ENCODE measurements at regions of chr21 and their contacts with region 1.

Region 1: DNA sequence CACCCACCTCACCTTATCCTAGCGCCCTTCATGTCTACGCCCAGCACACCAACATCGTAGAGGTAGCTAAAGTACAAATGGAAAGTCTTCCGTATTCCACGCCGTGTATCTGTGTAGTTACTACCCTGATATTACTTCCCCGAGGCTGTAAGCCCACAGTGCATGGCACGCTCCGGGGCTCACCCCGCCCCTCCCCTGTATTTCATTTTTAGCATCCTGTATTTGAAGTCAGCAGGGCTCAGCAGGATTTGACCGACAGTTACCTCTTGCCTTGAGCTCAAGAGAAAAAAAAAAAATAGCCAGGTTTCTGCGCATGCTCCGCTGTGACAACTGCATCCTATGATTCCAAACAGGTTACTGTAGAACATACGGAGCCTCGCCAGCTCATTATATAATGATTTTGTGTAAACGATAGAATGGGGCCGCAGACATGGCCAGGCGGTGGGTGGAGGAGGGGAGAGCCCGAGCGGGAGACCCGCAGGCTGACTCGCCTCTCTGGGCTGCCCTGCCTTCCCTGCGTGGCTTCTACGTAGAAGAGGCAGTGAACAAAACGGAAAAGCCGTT is 1.3 kb downstream of the ABCG1 start:
- DNase-seq: peak; percentile 34 to 96 (median 70)
- ATAC-seq: peak; percentile 87
- H3K4me3 ChIP-seq: peak overlapping the region; percentile 84 to 88
- H3K4me3 Mint-ChIP-seq: peak overlapping the region; percentile 89
- H3K27ac ChIP-seq: peak overlapping the region; percentile 74 to 91
- H3K27ac Mint-ChIP-seq: peak overlapping the region; percentile 94
- H3K4me1 ChIP-seq: peaks cover 11% of the 10 kb centered on the region
- H3K4me1 Mint-ChIP-seq: peaks cover 32% of the 10 kb centered on the region
- H3K27me3 ChIP-seq: no peaks in the 10 kb centered on the region
- H3K27me3 Mint-ChIP-seq: no peaks in the 10 kb centered on the region
- CTCF ChIP-seq: no peak

Region 2: DNA sequence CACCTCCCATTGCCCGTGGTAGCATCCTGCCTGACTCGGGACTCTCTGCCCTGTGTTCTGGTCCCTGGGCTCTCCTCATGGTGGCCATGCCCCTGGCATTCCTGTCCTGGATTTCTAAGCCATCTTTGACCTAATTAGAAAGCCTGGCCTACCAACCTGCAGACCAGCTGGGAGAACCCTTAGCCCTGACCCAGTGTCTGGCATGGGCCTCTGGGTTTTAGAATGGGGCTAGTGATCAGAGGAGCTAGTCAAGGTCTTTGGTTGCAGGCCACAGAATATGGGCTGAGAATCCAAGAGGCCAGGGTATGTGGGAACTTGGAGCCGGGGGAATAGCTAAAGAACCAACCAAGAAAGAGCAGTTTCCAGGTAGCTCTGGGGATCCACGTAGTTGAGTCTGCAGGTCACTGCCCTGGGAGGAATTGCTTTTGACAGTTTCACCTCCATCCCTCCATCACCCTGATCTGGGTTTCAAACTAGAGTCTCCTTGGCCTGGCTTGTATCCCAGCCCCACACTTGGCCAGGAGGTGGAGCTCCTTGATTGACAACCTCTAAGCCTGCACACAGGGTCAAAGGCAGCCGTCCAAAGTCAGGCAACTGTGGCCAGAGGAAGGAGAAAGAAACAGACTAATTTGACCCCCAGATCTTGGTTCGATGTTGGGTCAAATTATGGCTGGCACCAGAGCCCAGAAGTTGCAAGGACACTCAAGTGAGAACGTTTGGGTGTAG is 56.0 kb before region 1 on chr21:
- CTCF ChIA-PET with region 1: interaction called, 10 read pairs
- POLR2A ChIA-PET with region 1: interaction called, 3 read pairs
- intact Hi-C with region 1: loop called (anchors 5 kb)
- DNase-seq: peak in 8 of 9 experiments; percentile 36 to 75 (median 58)
- ATAC-seq: peak; percentile 34
- H3K4me3 ChIP-seq: no peak overlapping the region
- H3K4me3 Mint-ChIP-seq: no peak overlapping the region
- H3K27ac ChIP-seq: no peak overlapping the region
- H3K27ac Mint-ChIP-seq: no peak overlapping the region
- H3K4me1 ChIP-seq: peaks cover 34% of the 10 kb centered on the region
- H3K4me1 Mint-ChIP-seq: peaks cover 32% of the 10 kb centered on the region
- H3K27me3 ChIP-seq: no peaks in the 10 kb centered on the region
- H3K27me3 Mint-ChIP-seq: no peaks in the 10 kb centered on the region
- CTCF ChIP-seq: peak; percentile 51

Region 3: DNA sequence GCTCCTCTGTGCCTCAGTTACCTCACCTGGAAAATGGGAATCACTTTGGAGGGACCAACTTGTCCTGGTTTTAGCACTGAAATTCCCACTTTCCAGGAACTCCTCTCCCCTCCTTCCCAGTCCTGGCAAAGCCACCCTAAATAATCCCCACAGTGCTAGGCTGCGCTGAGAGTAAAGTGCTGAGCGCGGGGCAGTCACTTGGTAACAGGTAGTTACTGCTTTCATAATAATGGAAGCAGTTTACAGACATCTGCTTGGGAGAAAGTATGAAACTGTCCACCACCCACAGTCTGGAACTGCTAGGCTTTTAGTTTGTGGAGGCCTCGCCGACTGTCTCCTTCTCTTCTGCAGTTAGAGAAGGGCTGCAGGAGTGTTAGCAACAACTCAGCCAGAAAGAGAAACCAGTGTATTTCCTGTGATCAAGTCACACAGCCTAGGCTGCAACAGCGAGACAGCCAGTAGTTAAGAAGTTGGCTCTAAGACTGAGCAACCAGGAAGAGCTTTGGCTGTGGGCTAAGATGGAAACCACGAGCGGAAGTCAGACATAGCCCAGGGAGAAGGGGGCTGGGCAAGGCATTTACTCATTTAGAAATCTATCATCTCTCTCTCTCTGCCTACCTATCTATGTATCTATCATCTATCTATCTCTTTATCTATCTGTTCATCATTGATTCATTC is 32.1 kb before region 1 on chr21:
- CTCF ChIA-PET with region 1: interaction called, 3 read pairs
- POLR2A ChIA-PET with region 1: interaction called, 13 read pairs
- intact Hi-C with region 1: loop called (anchors 1 kb)
- DNase-seq: peak; percentile 58 to 95 (median 80)
- ATAC-seq: peak; percentile 85
- H3K4me3 ChIP-seq: peak overlapping the region; percentile 11 to 22
- H3K4me3 Mint-ChIP-seq: peak overlapping the region; percentile 74
- H3K27ac ChIP-seq: peak overlapping the region; percentile 63 to 85
- H3K27ac Mint-ChIP-seq: peak overlapping the region; percentile 97
- H3K4me1 ChIP-seq: peaks cover 86% of the 10 kb centered on the region
- H3K4me1 Mint-ChIP-seq: peaks cover 77% of the 10 kb centered on the region
- H3K27me3 ChIP-seq: no peaks in the 10 kb centered on the region
- H3K27me3 Mint-ChIP-seq: no peaks in the 10 kb centered on the region
- CTCF ChIP-seq: no peak

Region 4: GRCh38 chr21:42199488-42200458 is 20.4 kb before region 1 on chr21:
- CTCF ChIA-PET with region 1: interaction called, 3 read pairs
- POLR2A ChIA-PET with region 1: interaction called, 3 read pairs
- intact Hi-C with region 1: loop called (anchors 1 to 2 kb)
- DNase-seq: peak in 4 of 9 experiments; percentile 34 to 76 (median 48)
- ATAC-seq: peak; percentile 77
- H3K4me3 ChIP-seq: no peak overlapping the region
- H3K4me3 Mint-ChIP-seq: peak overlapping the region; percentile 5
- H3K27ac ChIP-seq: peak overlapping the region; percentile 15 to 40
- H3K27ac Mint-ChIP-seq: peak overlapping the region; percentile 89
- H3K4me1 ChIP-seq: peaks cover 39% of the 10 kb centered on the region
- H3K4me1 Mint-ChIP-seq: peaks cover 68% of the 10 kb centered on the region
- H3K27me3 ChIP-seq: no peaks in the 10 kb centered on the region
- H3K27me3 Mint-ChIP-seq: no peaks in the 10 kb centered on the region
- CTCF ChIP-seq: no peak

Region 5: GRCh38 chr21:42233067-42233961 is 13.1 kb after region 1 on chr21:
- CTCF ChIA-PET with region 1: interaction called, 12 read pairs
- POLR2A ChIA-PET with region 1: interaction called, 12 read pairs
- intact Hi-C with region 1: loop called (anchors 1 kb)
- DNase-seq: peak; percentile 49 to 95 (median 72)
- ATAC-seq: peak; percentile 57
- H3K4me3 ChIP-seq: peak overlapping the region in 1 of 2 experiments; percentile 1
- H3K4me3 Mint-ChIP-seq: peak overlapping the region; percentile 70
- H3K27ac ChIP-seq: peak overlapping the region; percentile 69 to 93
- H3K27ac Mint-ChIP-seq: peak overlapping the region; percentile 95
- H3K4me1 ChIP-seq: peaks cover 80% of the 10 kb centered on the region
- H3K4me1 Mint-ChIP-seq: peaks cover 94% of the 10 kb centered on the region
- H3K27me3 ChIP-seq: no peaks in the 10 kb centered on the region
- H3K27me3 Mint-ChIP-seq: no peaks in the 10 kb centered on the region
- CTCF ChIP-seq: peak; percentile 50

Region 6: GRCh38 chr21:42238185-42238934 is 18.1 kb after region 1 on chr21:
- CTCF ChIA-PET with region 1: interaction called, 12 read pairs
- POLR2A ChIA-PET with region 1: interaction called, 12 read pairs
- intact Hi-C with region 1: loop called (anchors 1 kb)
- DNase-seq: peak in 7 of 9 experiments; percentile 16 to 88 (median 61)
- ATAC-seq: peak; percentile 29
- H3K4me3 ChIP-seq: no peak overlapping the region
- H3K4me3 Mint-ChIP-seq: peak overlapping the region; percentile 63
- H3K27ac ChIP-seq: peak overlapping the region; percentile 45 to 83
- H3K27ac Mint-ChIP-seq: peak overlapping the region; percentile 93
- H3K4me1 ChIP-seq: peaks cover 62% of the 10 kb centered on the region
- H3K4me1 Mint-ChIP-seq: peaks cover 73% of the 10 kb centered on the region
- H3K27me3 ChIP-seq: no peaks in the 10 kb centered on the region
- H3K27me3 Mint-ChIP-seq: no peaks in the 10 kb centered on the region
- CTCF ChIP-seq: no peak

Region 7: GRCh38 chr21:42467140-42467983 is 247.1 kb after region 1 on chr21:
- CTCF ChIA-PET with region 1: no interaction called
- POLR2A ChIA-PET with region 1: no interaction called
- intact Hi-C with region 1: loop called in 1 of 2 experiments (anchors 5 kb)
- DNase-seq: peak in 3 of 9 experiments; percentile 36 to 58 (median 38)
- ATAC-seq: no peak
- H3K4me3 ChIP-seq: no peak overlapping the region
- H3K4me3 Mint-ChIP-seq: no peak overlapping the region
- H3K27ac ChIP-seq: no peak overlapping the region
- H3K27ac Mint-ChIP-seq: no peak overlapping the region
- H3K4me1 ChIP-seq: peaks cover 35% of the 10 kb centered on the region
- H3K4me1 Mint-ChIP-seq: peaks cover 37% of the 10 kb centered on the region
- H3K27me3 ChIP-seq: no peaks in the 10 kb centered on the region
- H3K27me3 Mint-ChIP-seq: no peaks in the 10 kb centered on the region
- CTCF ChIP-seq: peak; percentile 27